Transverse colon (tissue), 4 donors: ENCODE measurements at regions of chr11 and their contacts with region 1.

Region 1: DNA sequence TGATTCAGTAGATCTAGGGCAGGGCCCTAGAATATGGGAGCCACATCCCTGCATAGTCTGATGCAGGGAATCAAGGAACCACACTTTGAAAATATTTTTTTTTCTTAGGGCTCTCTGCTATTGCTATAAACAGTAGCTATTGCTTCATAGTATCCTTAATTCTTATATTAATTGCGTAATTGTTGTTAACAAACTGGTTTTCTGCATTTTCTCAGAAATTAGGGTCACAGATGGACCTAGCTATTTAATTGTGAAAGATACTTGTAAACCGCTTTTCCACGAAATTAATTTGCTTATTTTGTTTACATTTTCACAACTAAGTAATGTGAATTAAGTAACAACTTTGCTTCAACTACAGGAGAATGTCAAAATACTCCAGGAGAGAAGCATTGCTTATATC is 34.1 kb downstream of the NAALAD2 start:
- DNase-seq: no peak
- H3K4me3 ChIP-seq: no peak overlapping the region
- H3K27ac ChIP-seq: no peak overlapping the region
- H3K4me1 ChIP-seq: no peaks in the 10 kb centered on the region
- H3K27me3 ChIP-seq: no peaks in the 10 kb centered on the region
- CTCF ChIP-seq: no peak
- EP300 ChIP-seq: no peak
- POLR2A ChIP-seq: no peak

Region 2: GRCh38 chr11:90148900-90149299 is 19.7 kb before region 1 on chr11:
- in situ Hi-C with region 1: no loop called
- intact Hi-C with region 1: no loop called
- DNase-seq: no peak
- H3K4me3 ChIP-seq: no peak overlapping the region
- H3K27ac ChIP-seq: no peak overlapping the region
- H3K4me1 ChIP-seq: no peaks in the 10 kb centered on the region
- H3K27me3 ChIP-seq: no peaks in the 10 kb centered on the region
- CTCF ChIP-seq: no peak
- EP300 ChIP-seq: no peak
- POLR2A ChIP-seq: no peak

Region 3: GRCh38 chr11:90178760-90179159 is 10.2 kb after region 1 on chr11:
- in situ Hi-C with region 1: no loop called
- intact Hi-C with region 1: loop called (anchors 1 kb)
- DNase-seq: no peak
- H3K4me3 ChIP-seq: no peak overlapping the region
- H3K27ac ChIP-seq: no peak overlapping the region
- H3K4me1 ChIP-seq: no peaks in the 10 kb centered on the region
- H3K27me3 ChIP-seq: no peaks in the 10 kb centered on the region
- CTCF ChIP-seq: no peak
- EP300 ChIP-seq: no peak
- POLR2A ChIP-seq: no peak

Region 4: GRCh38 chr11:90380206-90380605 is 211.6 kb after region 1 on chr11:
- in situ Hi-C with region 1: no loop called
- intact Hi-C with region 1: no loop called
- DNase-seq: no peak
- H3K4me3 ChIP-seq: no peak overlapping the region
- H3K27ac ChIP-seq: no peak overlapping the region
- H3K4me1 ChIP-seq: no peaks in the 10 kb centered on the region
- H3K27me3 ChIP-seq: no peaks in the 10 kb centered on the region
- CTCF ChIP-seq: no peak
- EP300 ChIP-seq: no peak
- POLR2A ChIP-seq: no peak